Mammary epithelial cell (primary cell): ENCODE measurements at regions of chr5 and their contacts with region 1.

Region 1: DNA sequence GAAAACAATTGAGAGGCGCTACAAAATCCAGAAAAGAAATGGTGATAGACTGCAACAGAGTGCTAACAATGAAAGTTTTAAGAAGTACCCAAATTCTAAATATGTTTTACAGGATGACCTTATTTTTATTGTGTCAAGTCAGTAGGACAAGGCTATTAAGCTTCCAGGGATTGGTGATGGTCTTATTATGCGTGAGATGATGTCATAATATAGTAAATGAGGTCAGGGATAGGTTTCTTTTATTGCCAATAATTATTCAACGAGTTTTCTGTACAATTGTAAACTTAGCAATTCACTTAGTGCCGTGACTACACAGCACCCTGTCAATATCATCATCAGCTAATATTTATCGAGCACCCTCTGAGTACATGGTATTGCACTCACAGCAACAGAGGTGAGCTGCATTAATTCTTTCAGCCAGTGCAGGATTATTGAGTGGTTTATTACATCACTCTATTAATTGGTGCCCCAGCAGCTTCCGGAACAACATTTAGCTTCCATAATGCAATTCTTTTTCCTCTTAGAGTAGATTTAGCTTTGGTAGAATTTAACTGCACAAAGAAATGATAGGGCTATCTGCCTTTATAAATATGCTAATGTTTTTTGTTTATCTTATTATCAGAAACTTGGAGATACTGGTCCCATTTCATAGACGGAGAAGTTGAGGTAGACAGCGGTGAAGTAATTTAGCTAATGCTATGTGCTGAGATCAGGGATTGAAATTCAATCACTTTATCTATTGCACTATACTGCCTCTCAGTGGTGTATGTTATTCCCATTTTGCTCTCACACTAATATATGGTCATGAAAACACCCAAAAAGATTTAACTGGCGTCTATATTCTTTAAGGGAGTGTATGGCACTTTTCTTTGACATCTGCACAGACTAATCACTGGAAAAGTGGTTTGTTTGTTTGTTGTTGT is 726.2 kb upstream of the WWC1 start:
- DNase-seq: peak; percentile 8
- H3K4me3 ChIP-seq: no peak overlapping the region
- H3K27ac ChIP-seq: no peak overlapping the region
- H3K4me1 ChIP-seq: no peaks in the 10 kb centered on the region
- H3K27me3 ChIP-seq: no peaks in the 10 kb centered on the region
- CTCF ChIP-seq: peak; percentile 44 to 45

Region 2: GRCh38 chr5:165630261-165630778 is 1935.0 kb before region 1 on chr5:
- CTCF ChIA-PET with region 1: no interaction called
- dilution Hi-C with region 1: no loop called
- in situ Hi-C with region 1: no loop called
- intact Hi-C with region 1: loop called (anchors 2 kb)
- DNase-seq: peak; percentile 19
- H3K4me3 ChIP-seq: no peak overlapping the region
- H3K27ac ChIP-seq: no peak overlapping the region
- H3K4me1 ChIP-seq: no peaks in the 10 kb centered on the region
- H3K27me3 ChIP-seq: no peaks in the 10 kb centered on the region
- CTCF ChIP-seq: peak; percentile 79

Region 3: DNA sequence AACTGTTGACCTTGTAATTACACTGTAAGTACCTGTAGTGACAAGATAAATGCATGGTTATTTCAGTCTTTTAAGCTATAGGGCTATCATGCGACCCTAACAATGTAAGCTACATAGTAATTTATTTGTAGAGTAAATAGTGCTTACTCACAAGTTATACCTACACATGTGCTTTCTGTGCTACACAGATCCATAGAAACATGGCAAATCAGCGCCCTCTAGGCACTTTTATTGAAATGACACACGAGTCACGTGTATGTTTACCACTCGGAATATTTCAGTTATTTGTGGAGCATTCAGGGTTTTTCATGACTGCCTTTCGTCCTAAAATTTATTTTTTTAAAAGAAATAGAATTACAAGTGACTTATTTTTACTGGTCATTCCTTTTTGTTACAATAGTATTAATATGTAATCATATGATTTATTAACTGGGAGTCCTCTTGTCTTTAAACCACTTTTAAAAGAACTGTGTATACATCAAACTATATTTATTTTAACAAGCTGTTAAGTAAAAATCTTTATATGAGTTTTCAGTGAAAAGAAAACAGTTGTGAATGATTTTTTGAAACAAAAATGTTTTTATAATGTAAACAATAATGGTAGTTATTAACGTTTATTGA is 516.1 kb before region 1 on chr5:
- CTCF ChIA-PET with region 1: no interaction called
- dilution Hi-C with region 1: no loop called
- in situ Hi-C with region 1: no loop called
- intact Hi-C with region 1: loop called (anchors 5 kb)
- DNase-seq: peak; percentile 32
- H3K4me3 ChIP-seq: no peak overlapping the region
- H3K27ac ChIP-seq: no peak overlapping the region
- H3K4me1 ChIP-seq: no peaks in the 10 kb centered on the region
- H3K27me3 ChIP-seq: no peaks in the 10 kb centered on the region
- CTCF ChIP-seq: peak; percentile 71 to 75

Region 4: GRCh38 chr5:167261309-167262100 is 303.8 kb before region 1 on chr5:
- CTCF ChIA-PET with region 1: no interaction called
- dilution Hi-C with region 1: no loop called
- in situ Hi-C with region 1: loop called in 1 of 2 experiments (anchors 25 kb)
- intact Hi-C with region 1: loop called (anchors 1 kb)
- DNase-seq: peak; percentile 2
- H3K4me3 ChIP-seq: no peak overlapping the region
- H3K27ac ChIP-seq: no peak overlapping the region
- H3K4me1 ChIP-seq: no peaks in the 10 kb centered on the region
- H3K27me3 ChIP-seq: peaks cover 6% of the 10 kb centered on the region
- CTCF ChIP-seq: peak; percentile 50 to 51